ENCODE measurements at regions of chr10 and their contacts with region 1.

Region 1: DNA sequence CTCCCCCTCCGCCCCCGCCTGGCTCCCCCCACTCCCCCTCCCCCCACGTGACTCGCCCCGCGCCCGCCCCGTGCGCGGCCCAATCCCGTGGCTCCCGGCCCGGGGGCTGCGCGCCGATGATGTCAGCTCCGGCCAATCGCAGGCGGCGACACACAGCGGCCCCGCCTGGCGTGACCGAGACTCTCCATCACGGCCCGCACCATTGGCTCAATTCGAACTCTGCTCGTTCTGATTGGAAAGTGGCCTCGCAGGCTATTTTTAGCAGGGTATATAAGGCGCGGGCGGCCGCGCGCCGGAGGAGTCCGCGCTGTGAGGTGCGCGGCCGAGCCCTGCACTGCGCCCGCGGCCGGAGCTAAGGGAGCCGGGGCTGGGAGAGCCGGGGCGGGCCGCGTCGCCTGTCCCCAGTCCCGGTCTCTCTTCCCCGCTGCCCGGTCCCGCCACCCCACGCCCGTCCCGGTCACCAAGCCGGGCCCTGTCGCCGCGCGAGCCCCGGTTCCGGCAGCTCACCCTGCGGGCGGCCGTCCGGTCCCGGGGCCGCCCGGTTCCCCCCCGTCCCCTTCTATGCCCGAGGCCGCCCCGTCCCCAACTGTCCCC is 345 bp upstream of the KLF6 start:
- DNase-seq: peak; percentile 100
- H3K4me3 Mint-ChIP-seq: peak overlapping the region; percentile 91
- H3K27ac Mint-ChIP-seq: peak overlapping the region; percentile 99
- H3K4me1 Mint-ChIP-seq: peaks cover 48% of the 10 kb centered on the region
- H3K27me3 Mint-ChIP-seq: no peaks in the 10 kb centered on the region

Region 2: GRCh38 chr10:3467052-3467951 is 318.1 kb before region 1 on chr10:
- intact Hi-C with region 1: loop called (anchors 5 kb)
- DNase-seq: peak; percentile 79
- H3K4me3 Mint-ChIP-seq: peak overlapping the region; percentile 82
- H3K27ac Mint-ChIP-seq: peak overlapping the region; percentile 96
- H3K4me1 Mint-ChIP-seq: peaks cover 51% of the 10 kb centered on the region
- H3K27me3 Mint-ChIP-seq: no peaks in the 10 kb centered on the region

Region 3: GRCh38 chr10:3525832-3526449 is 259.4 kb before region 1 on chr10:
- intact Hi-C with region 1: no loop called
- DNase-seq: no peak
- H3K4me3 Mint-ChIP-seq: no peak overlapping the region
- H3K27ac Mint-ChIP-seq: no peak overlapping the region
- H3K4me1 Mint-ChIP-seq: no peaks in the 10 kb centered on the region
- H3K27me3 Mint-ChIP-seq: peaks cover 26% of the 10 kb centered on the region

Region 4: GRCh38 chr10:3668276-3668965 is 116.9 kb before region 1 on chr10:
- intact Hi-C with region 1: loop called (anchors 2 kb)
- DNase-seq: peak; percentile 89
- H3K4me3 Mint-ChIP-seq: peak overlapping the region; percentile 86
- H3K27ac Mint-ChIP-seq: peak overlapping the region; percentile 92
- H3K4me1 Mint-ChIP-seq: peaks cover 34% of the 10 kb centered on the region
- H3K27me3 Mint-ChIP-seq: peaks cover 2% of the 10 kb centered on the region

Region 5: GRCh38 chr10:3797750-3798149 is 12.4 kb after region 1 on chr10:
- intact Hi-C with region 1: loop called (anchors 1 kb)
- DNase-seq: no peak
- H3K4me3 Mint-ChIP-seq: peak overlapping the region; percentile 40
- H3K27ac Mint-ChIP-seq: peak overlapping the region; percentile 95
- H3K4me1 Mint-ChIP-seq: peaks cover 45% of the 10 kb centered on the region
- H3K27me3 Mint-ChIP-seq: no peaks in the 10 kb centered on the region

Region 6: GRCh38 chr10:3828404-3829155 is 43.2 kb after region 1 on chr10:
- intact Hi-C with region 1: loop called (anchors 2 kb)
- DNase-seq: peak; percentile 78
- H3K4me3 Mint-ChIP-seq: peak overlapping the region; percentile 68
- H3K27ac Mint-ChIP-seq: peak overlapping the region; percentile 92
- H3K4me1 Mint-ChIP-seq: peaks cover 52% of the 10 kb centered on the region
- H3K27me3 Mint-ChIP-seq: no peaks in the 10 kb centered on the region

Region 7: GRCh38 chr10:3972460-3973301 is 187.3 kb after region 1 on chr10:
- intact Hi-C with region 1: loop called (anchors 2 kb)
- DNase-seq: peak; percentile 87
- H3K4me3 Mint-ChIP-seq: peak overlapping the region; percentile 88
- H3K27ac Mint-ChIP-seq: peak overlapping the region; percentile 99
- H3K4me1 Mint-ChIP-seq: peaks cover 41% of the 10 kb centered on the region
- H3K27me3 Mint-ChIP-seq: no peaks in the 10 kb centered on the region

Measured in activated CD4-positive, alpha-beta T cell treated with anti-CD3 and anti-CD28 coated beads, Interleukin-2, amount 10 ng/mL, durations not matched to agents 24 days and 14 days (primary cell).